ENCODE measurements at regions of chr22 and their contacts with region 1.

Region 1: GRCh38 chr22:22942511-22943329 is 55.1 kb downstream of the IGLL5 start:
- DNase-seq: peak; percentile 99 to 100 (median 100)
- ATAC-seq: peak; percentile 94
- H3K4me3 ChIP-seq: no peak overlapping the region
- H3K27ac ChIP-seq: no peak overlapping the region
- H3K4me1 ChIP-seq: peaks cover 0 to 3% of the 10 kb centered on the region in 2 experiments; a peak in 1 of 5 replicates
- H3K27me3 ChIP-seq: peaks cover 19 to 38% of the 10 kb centered on the region in 2 experiments; a peak in 4 of 5 replicates
- CTCF ChIP-seq: no peak
- EP300 ChIP-seq: no peak
- POLR2A ChIP-seq: no peak
- RAD21 ChIP-seq: no peak

Region 2: DNA sequence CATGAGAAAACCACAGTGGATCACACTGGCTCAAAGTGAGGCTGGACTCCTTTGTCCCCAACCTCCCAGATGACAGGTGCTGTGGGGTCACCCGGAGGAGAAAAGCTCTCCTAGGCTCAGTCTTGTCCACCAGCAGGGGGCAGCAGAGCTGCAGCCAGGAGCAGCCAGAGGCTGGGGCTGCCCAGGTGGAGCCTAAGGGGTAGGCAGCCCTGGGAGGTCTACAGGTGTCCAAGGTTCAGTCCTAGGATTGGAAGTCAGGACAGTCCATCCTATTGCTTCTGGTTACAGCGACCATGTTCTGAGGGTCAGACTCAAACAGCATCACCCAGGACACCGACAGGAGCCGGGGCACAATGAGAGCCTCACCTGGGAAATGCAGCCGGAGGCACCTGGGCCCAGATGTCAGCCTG is 132.7 kb before region 1 on chr22:
- CTCF ChIA-PET with region 1: interaction called, 17 read pairs
- POLR2A ChIA-PET with region 1: interaction called, 4 read pairs
- in situ Hi-C with region 1: no loop called
- intact Hi-C with region 1: loop called (anchors 1 kb)
- DNase-seq: peak; percentile 97 to 100 (median 98)
- ATAC-seq: peak; percentile 96
- H3K4me3 ChIP-seq: no peak overlapping the region
- H3K27ac ChIP-seq: no peak overlapping the region
- H3K4me1 ChIP-seq: peaks cover 0 to 4% of the 10 kb centered on the region in 2 experiments; a peak in 1 of 5 replicates
- H3K27me3 ChIP-seq: peaks cover 8 to 19% of the 10 kb centered on the region in 2 experiments; a peak in 3 of 5 replicates
- CTCF ChIP-seq: no peak
- EP300 ChIP-seq: no peak
- POLR2A ChIP-seq: no peak
- RAD21 ChIP-seq: no peak

Region 3: DNA sequence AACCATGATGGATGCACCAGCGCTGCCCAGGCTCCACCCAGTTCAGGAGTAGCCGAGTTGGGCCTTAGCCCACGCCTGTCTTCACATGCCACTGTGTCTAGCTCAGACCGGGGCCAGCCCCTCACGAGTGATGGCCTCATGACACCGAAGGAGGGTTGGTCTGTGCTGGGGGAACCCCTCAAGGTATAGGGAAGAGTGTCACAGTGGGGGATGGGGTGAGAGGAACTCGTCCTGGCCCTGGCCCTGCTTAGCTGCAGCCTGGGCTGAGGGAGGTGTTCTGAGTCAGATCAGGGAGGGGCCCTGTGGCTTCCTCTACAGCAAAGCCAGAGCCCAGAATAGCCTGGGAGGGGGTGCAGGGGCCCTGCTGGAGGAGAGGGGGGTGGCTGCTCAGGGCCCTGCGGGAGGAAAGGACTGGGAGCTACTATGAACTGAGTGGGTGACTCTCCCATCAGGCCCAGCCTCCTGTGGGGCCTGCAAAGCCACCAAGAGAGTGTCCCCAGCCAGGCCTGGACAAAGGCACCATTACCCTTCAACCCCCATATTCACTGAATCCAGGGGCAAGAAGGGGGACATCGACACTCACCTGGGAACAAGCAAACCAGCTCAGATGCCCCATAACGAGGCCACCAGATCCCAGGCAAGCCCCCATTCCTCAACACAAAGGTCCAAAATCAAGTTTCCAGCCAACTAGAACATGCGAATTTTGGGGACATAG is 13.9 kb before region 1 on chr22:
- CTCF ChIA-PET with region 1: no interaction called
- POLR2A ChIA-PET with region 1: interaction called, 74 read pairs
- in situ Hi-C with region 1: no loop called
- intact Hi-C with region 1: no loop called
- DNase-seq: peak in 3 of 4 experiments; percentile 58 to 89 (median 67)
- ATAC-seq: peak; percentile 61
- H3K4me3 ChIP-seq: no peak overlapping the region
- H3K27ac ChIP-seq: no peak overlapping the region; the same call in 2 of the 3 replicates
- H3K4me1 ChIP-seq: peaks cover 16 to 18% of the 10 kb centered on the region in 2 experiments
- H3K27me3 ChIP-seq: peaks cover 8 to 48% of the 10 kb centered on the region in 2 experiments; a peak in 3 of 5 replicates
- CTCF ChIP-seq: peak in 2 of 3 experiments; percentile 2 to 13; a peak in 2 of 6 replicates
- EP300 ChIP-seq: no peak; the same call in 1 of the 2 replicates
- POLR2A ChIP-seq: no peak
- RAD21 ChIP-seq: 0 out of 4 replicates have a peak, but pooled peaks of 1 of the 2 experiments have one; percentile 3

Region 4: GRCh38 chr22:22981670-22982571 is 39.2 kb after region 1 on chr22:
- CTCF ChIA-PET with region 1: no interaction called
- POLR2A ChIA-PET with region 1: no interaction called
- in situ Hi-C with region 1: no loop called
- intact Hi-C with region 1: no loop called
- DNase-seq: no peak
- ATAC-seq: peak; percentile 19
- H3K4me3 ChIP-seq: no peak overlapping the region
- H3K27ac ChIP-seq: no peak overlapping the region
- H3K4me1 ChIP-seq: no peaks in the 10 kb centered on the region
- H3K27me3 ChIP-seq: peaks cover 7 to 11% of the 10 kb centered on the region in 2 experiments; a peak in 3 of 5 replicates
- CTCF ChIP-seq: no peak
- EP300 ChIP-seq: no peak
- POLR2A ChIP-seq: no peak
- RAD21 ChIP-seq: no peak

Region 5: DNA sequence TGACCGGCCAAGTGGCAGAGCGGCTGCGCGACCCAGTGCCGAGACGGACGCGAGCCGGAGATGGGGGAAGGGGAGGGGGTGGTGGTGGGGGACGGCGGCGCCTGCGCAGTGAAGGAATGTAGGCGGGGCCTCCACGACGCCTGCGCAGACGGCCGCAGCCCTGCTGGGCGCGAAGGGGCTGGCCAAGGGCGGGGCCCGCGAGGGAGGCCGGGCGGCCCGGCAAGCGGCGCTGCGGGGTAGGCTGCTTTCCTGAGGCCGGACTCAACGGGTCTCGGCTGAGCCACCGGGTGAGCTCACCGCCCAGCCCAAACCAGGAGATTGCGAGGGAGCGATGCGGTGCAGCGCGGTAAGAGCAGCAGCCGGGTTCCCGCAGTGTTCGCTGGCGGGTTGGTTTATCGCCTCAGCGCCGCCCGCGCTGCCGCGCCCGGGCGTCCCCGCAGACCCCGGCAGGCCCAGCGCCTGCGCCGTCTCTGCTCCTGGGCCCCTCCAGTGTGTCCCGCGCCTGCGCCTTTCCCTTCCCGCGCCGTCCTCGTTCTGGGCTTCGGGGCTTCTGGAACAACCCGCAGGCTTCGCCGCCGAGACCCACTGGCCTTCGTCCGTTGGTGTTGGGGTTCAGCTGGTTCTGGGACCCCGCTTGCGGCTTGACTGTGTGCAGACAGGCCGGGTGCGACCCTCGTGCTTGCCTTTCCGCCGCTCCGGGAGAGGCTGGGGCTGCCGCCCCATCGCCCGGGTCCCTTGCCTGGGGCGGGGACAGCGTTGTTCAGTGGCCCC is 1328.1 kb after region 1 on chr22 and contains the start of gene SPECC1L:
- CTCF ChIA-PET with region 1: no interaction called
- POLR2A ChIA-PET with region 1: no interaction called
- in situ Hi-C with region 1: loop called (anchors 25 kb)
- intact Hi-C with region 1: no loop called
- DNase-seq: peak; percentile 90 to 94 (median 92)
- ATAC-seq: peak; percentile 96
- H3K4me3 ChIP-seq: peak within 1 kb of the TSS; percentile 92
- H3K27ac ChIP-seq: peak within 1 kb of the TSS; percentile 98
- H3K4me1 ChIP-seq: peaks cover 0 to 17% of the 10 kb centered on the region in 2 experiments; a peak in 2 of 5 replicates
- H3K27me3 ChIP-seq: no peaks in the 10 kb centered on the region
- CTCF ChIP-seq: peak in 2 of 3 experiments; percentile 16 to 34; a peak in 2 of 6 replicates
- EP300 ChIP-seq: no peak
- POLR2A ChIP-seq: peak; percentile 92
- RAD21 ChIP-seq: no peak
- polyA plus RNA-seq, gene SPECC1L: 1.4 to 2.6 TPM

Measured in K562 (cell line).